ENCODE measurements at regions of chr22 and their contacts with region 1.

Region 1: DNA sequence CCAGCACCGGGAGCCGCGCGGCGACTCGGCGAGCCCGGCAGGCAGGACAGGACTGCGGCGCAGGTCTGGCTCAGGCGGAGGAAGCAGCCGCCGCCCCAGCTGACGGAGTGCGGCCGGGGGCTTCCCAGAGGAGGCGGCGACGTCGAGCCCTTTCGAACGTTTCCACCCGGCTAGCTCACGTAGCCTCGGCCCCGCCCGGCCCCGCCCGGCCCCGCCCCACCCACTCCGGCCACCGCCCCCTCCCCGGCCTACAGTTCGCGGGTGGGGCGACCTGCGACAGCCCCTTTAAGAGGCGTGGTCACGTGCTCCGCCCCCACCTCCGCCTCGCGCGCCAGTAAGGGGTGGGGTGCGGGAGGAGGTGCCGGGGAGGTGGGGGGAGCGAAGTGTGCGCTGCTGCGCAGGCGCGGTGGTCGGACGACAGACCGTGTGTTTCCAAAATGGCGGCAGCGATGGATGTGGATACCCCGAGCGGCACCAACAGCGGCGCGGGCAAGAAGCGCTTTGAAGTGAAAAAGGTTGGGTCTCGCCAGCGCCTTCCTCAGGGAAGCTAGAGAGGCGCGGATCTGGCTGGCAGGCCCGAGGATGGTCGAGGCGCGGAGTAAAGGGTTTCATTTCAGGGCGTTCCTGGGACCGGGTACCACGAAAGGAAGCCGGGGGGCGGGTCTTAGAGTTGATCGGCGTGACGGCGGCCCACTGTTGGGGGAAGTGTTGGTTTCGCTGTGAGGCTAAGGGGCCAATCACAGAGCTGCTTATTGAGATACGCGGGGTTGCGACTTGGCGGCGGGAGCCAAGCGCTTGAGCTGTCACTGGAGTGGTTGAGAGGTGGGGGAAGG is at the start of gene RBX1:
- DNase-seq: peak; percentile 98
- H3K4me3 Mint-ChIP-seq: peak within 1 kb of the TSS; percentile 95
- H3K27ac Mint-ChIP-seq: peak within 1 kb of the TSS; percentile 98
- H3K4me1 Mint-ChIP-seq: peaks cover 28% of the 10 kb centered on the region
- H3K27me3 Mint-ChIP-seq: no peaks in the 10 kb centered on the region
- total RNA-seq, gene RBX1: 103 and 110 TPM in 2 replicates

Region 2: GRCh38 chr22:40818747-40819598 is 132.2 kb before region 1 on chr22 and contains the start of gene SLC25A17:
- intact Hi-C with region 1: loop called (anchors 5 kb)
- DNase-seq: peak; percentile 80
- H3K4me3 Mint-ChIP-seq: peak within 1 kb of the TSS; percentile 82
- H3K27ac Mint-ChIP-seq: peak within 1 kb of the TSS; percentile 80
- H3K4me1 Mint-ChIP-seq: peaks cover 33% of the 10 kb centered on the region
- H3K27me3 Mint-ChIP-seq: no peaks in the 10 kb centered on the region
- total RNA-seq, gene SLC25A17: 27.3 and 33.0 TPM in 2 replicates

Region 3: GRCh38 chr22:40844951-40845350 is 106.2 kb before region 1 on chr22:
- intact Hi-C with region 1: no loop called
- DNase-seq: no peak
- H3K4me3 Mint-ChIP-seq: no peak overlapping the region
- H3K27ac Mint-ChIP-seq: no peak overlapping the region
- H3K4me1 Mint-ChIP-seq: peaks cover 5% of the 10 kb centered on the region
- H3K27me3 Mint-ChIP-seq: no peaks in the 10 kb centered on the region

Region 4: DNA sequence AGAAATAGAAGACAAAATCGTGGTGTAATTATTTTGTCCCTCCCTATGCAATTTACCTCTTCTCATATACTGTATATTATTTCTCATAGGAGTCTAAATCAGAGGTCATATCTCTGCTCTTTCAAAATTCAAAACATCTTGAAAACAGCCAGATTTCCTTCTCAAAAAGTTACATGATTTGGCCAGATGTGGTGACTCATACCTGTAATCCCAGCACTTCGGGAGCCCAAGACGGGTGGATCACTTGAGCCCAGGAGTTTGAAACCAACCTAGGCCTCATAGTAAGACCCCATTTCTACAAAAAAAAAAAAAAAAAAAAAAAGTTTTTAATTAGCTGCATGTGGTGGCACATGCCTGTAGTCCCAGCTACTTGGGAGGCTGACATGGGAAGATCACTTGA is 60.3 kb before region 1 on chr22:
- intact Hi-C with region 1: no loop called
- DNase-seq: no peak
- H3K4me3 Mint-ChIP-seq: no peak overlapping the region
- H3K27ac Mint-ChIP-seq: no peak overlapping the region
- H3K4me1 Mint-ChIP-seq: peaks cover 2% of the 10 kb centered on the region
- H3K27me3 Mint-ChIP-seq: no peaks in the 10 kb centered on the region

Region 5: GRCh38 chr22:40922484-40923303 is 28.5 kb before region 1 on chr22:
- intact Hi-C with region 1: loop called (anchors 2 kb)
- DNase-seq: no peak
- H3K4me3 Mint-ChIP-seq: no peak overlapping the region
- H3K27ac Mint-ChIP-seq: peak overlapping the region; percentile 65
- H3K4me1 Mint-ChIP-seq: peaks cover 3% of the 10 kb centered on the region
- H3K27me3 Mint-ChIP-seq: no peaks in the 10 kb centered on the region

Region 6: GRCh38 chr22:40975366-40975765 is 24.2 kb after region 1 on chr22:
- intact Hi-C with region 1: no loop called
- DNase-seq: no peak
- H3K4me3 Mint-ChIP-seq: no peak overlapping the region
- H3K27ac Mint-ChIP-seq: no peak overlapping the region
- H3K4me1 Mint-ChIP-seq: peaks cover 1% of the 10 kb centered on the region
- H3K27me3 Mint-ChIP-seq: no peaks in the 10 kb centered on the region

Region 7: GRCh38 chr22:41091132-41092022 is 140.2 kb after region 1 on chr22:
- intact Hi-C with region 1: loop called (anchors 1 kb)
- DNase-seq: peak; percentile 98
- H3K4me3 Mint-ChIP-seq: peak overlapping the region; percentile 96
- H3K27ac Mint-ChIP-seq: peak overlapping the region; percentile 100
- H3K4me1 Mint-ChIP-seq: peaks cover 27% of the 10 kb centered on the region
- H3K27me3 Mint-ChIP-seq: no peaks in the 10 kb centered on the region

Region 8: GRCh38 chr22:41285820-41286638 is 334.9 kb after region 1 on chr22 and contains the start of gene RANGAP1:
- intact Hi-C with region 1: loop called (anchors 1 kb)
- DNase-seq: peak; percentile 99
- H3K4me3 Mint-ChIP-seq: peak within 1 kb of the TSS; percentile 93
- H3K27ac Mint-ChIP-seq: peak within 1 kb of the TSS; percentile 96
- H3K4me1 Mint-ChIP-seq: peaks cover 30% of the 10 kb centered on the region
- H3K27me3 Mint-ChIP-seq: no peaks in the 10 kb centered on the region
- total RNA-seq, gene RANGAP1: 189 and 192 TPM in 2 replicates

Region 9: GRCh38 chr22:41468381-41469217 is 517.4 kb after region 1 on chr22 and contains the starts of genes ACO2 and PHF5A:
- intact Hi-C with region 1: loop called (anchors 5 kb)
- DNase-seq: peak; percentile 97
- H3K4me3 Mint-ChIP-seq: peak within 1 kb of the TSS; percentile 85
- H3K27ac Mint-ChIP-seq: peak within 1 kb of the TSS; percentile 98
- H3K4me1 Mint-ChIP-seq: peaks cover 27% of the 10 kb centered on the region
- H3K27me3 Mint-ChIP-seq: no peaks in the 10 kb centered on the region
- total RNA-seq, gene ACO2: 94.1 and 96.1 TPM in 2 replicates
- total RNA-seq, gene PHF5A: 72.1 and 74.3 TPM in 2 replicates